ENCODE measurements at regions of chr18 and their contacts with region 1.

Region 1: DNA sequence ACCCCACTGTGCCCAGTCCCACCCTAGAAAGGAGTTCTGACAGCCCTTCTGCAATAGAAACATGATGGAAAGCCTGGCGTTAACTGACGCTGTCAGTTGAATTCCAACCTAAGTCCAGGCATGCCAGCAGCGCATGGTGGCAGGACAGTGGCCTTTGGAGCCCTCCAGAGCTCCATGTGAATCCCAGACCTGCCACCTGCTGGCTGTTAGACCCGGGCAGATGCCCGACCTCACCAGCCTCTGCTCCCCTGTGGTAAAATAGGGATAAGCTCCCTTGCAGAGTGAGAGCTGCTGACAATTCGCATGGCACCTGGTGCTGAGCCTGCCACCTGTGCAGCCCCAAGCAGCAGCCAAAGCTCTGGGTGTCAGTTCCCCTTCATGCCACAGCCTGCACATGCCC is 138.6 kb downstream of the LOXHD1 start:
- DNase-seq: no peak
- ATAC-seq: no peak
- H3K4me3 ChIP-seq: no peak overlapping the region
- H3K27ac ChIP-seq: no peak overlapping the region
- H3K4me1 ChIP-seq: no peaks in the 10 kb centered on the region
- H3K27me3 ChIP-seq: peaks cover 0 to 3% of the 10 kb centered on the region in 2 experiments; a peak in 3 of 4 replicates
- CTCF ChIP-seq: 0 out of 6 replicates have a peak, but pooled peaks of 1 of the 3 experiments have one; percentile 8
- EP300 ChIP-seq: no peak
- POLR2A ChIP-seq: no peak
- RAD21 ChIP-seq: no peak

Region 2: GRCh38 chr18:46469186-46469915 is 49.1 kb before region 1 on chr18:
- CTCF ChIA-PET with region 1: no interaction called
- POLR2A ChIA-PET with region 1: no interaction called
- RAD21 ChIA-PET with region 1: no interaction called
- SMC1A ChIA-PET with region 1: no interaction called
- in situ Hi-C with region 1: no loop called
- intact Hi-C with region 1: loop called (anchors 5 kb)
- DNase-seq: no peak
- ATAC-seq: no peak
- H3K4me3 ChIP-seq: no peak overlapping the region
- H3K27ac ChIP-seq: no peak overlapping the region
- H3K4me1 ChIP-seq: no peaks in the 10 kb centered on the region
- H3K27me3 ChIP-seq: no peaks in the 10 kb centered on the region
- CTCF ChIP-seq: no peak
- EP300 ChIP-seq: no peak
- POLR2A ChIP-seq: no peak
- RAD21 ChIP-seq: no peak

Region 3: GRCh38 chr18:46536215-46536874 is 17.9 kb after region 1 on chr18:
- CTCF ChIA-PET with region 1: no interaction called
- POLR2A ChIA-PET with region 1: no interaction called
- RAD21 ChIA-PET with region 1: no interaction called
- SMC1A ChIA-PET with region 1: no interaction called
- in situ Hi-C with region 1: no loop called
- intact Hi-C with region 1: no loop called
- DNase-seq: no peak
- ATAC-seq: no peak
- H3K4me3 ChIP-seq: no peak overlapping the region
- H3K27ac ChIP-seq: no peak overlapping the region
- H3K4me1 ChIP-seq: no peaks in the 10 kb centered on the region
- H3K27me3 ChIP-seq: peaks cover 0 to 2% of the 10 kb centered on the region in 2 experiments; a peak in 1 of 4 replicates
- CTCF ChIP-seq: no peak
- EP300 ChIP-seq: no peak
- POLR2A ChIP-seq: no peak
- RAD21 ChIP-seq: no peak

Region 4: GRCh38 chr18:46555724-46556123 is 37.3 kb after region 1 on chr18:
- CTCF ChIA-PET with region 1: no interaction called
- POLR2A ChIA-PET with region 1: no interaction called
- RAD21 ChIA-PET with region 1: no interaction called
- SMC1A ChIA-PET with region 1: no interaction called
- in situ Hi-C with region 1: no loop called
- intact Hi-C with region 1: no loop called
- DNase-seq: no peak
- ATAC-seq: peak; percentile 83
- H3K4me3 ChIP-seq: no peak overlapping the region
- H3K27ac ChIP-seq: no peak overlapping the region
- H3K4me1 ChIP-seq: no peaks in the 10 kb centered on the region
- H3K27me3 ChIP-seq: no peaks in the 10 kb centered on the region; a peak in 1 of 4 replicates
- CTCF ChIP-seq: peak; percentile 47 to 57 (median 57); a peak in 5 of 6 replicates
- EP300 ChIP-seq: no peak
- POLR2A ChIP-seq: no peak
- RAD21 ChIP-seq: peak; percentile 74

Measured in GM12878 (cell line).